ENCODE measurements at regions of chr12 and their contacts with region 1.

Region 1: GRCh38 chr12:115322275-115322674 is 638.3 kb upstream of the TBX3 start:
- DNase-seq: no peak
- ATAC-seq: no peak
- H3K4me3 ChIP-seq: no peak overlapping the region
- H3K27ac ChIP-seq: no peak overlapping the region
- H3K4me1 ChIP-seq: peaks cover 4 to 7% of the 10 kb centered on the region in 2 donors
- H3K27me3 ChIP-seq: no peaks in the 10 kb centered on the region

Region 2: DNA sequence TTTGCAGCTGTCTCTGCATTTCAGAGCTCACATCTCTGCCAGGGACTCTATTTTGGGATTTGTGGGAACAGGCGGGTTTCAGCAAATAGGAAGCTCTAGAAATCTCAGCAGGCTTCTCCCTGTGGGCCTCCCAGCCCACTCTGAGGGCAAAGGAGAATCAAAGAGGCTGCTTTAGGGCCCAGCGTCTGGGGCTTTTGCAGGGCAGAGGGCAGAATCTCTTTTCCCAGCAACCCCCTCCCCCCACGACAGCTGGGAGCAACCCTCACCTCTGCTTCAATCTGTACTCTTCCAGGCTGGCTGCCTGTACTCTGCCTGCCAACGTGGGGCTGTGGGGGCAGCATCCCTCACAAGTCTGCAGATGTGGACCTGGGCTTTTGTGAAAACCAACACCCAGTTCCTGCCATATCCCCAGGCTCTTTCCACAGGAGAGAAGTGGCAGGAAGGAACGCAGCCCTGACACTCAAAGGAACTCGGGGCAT is 108.7 kb before region 1 on chr12:
- intact Hi-C with region 1: no loop called
- DNase-seq: no peak
- ATAC-seq: no peak
- H3K4me3 ChIP-seq: no peak overlapping the region
- H3K27ac ChIP-seq: no peak overlapping the region
- H3K4me1 ChIP-seq: peaks cover 0 to 2% of the 10 kb centered on the region in 2 donors
- H3K27me3 ChIP-seq: no peaks in the 10 kb centered on the region

Region 3: DNA sequence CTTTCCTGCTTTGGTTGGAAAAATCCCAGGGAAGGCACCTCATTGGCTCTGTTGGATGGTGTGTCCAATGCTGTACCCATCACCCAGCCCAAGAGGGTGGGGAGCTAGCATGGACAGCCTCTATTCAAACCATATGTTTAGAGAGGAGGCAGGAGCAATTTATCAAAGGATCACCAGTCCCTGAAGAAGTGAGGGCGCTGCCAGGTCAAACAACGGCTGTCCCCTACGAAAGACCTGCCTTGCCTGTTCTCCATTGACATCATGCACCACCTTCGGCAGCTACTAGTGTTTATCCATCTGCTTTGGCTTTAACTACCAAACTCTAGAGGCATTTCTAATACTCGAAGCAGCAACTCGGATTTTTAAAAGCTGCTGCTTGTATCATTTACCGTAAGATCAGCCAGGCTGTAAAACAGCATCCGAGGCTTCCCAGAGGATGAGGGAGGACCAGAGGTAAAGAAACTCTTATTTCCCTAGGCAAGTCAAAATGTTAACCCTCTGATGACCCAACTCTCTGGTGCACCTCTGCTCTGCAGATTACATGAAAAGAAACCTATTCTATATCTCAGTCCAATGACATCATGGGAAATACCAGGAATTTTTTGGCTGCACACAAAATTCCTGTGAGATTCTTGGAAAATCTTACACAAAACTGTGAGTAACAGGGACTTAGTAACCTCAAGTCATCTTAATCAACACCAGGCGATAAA is 82.6 kb after region 1 on chr12:
- intact Hi-C with region 1: loop called in 1 of 2 experiments (anchors 10 kb)
- DNase-seq: no peak
- ATAC-seq: peak; percentile 16
- H3K4me3 ChIP-seq: no peak overlapping the region
- H3K27ac ChIP-seq: peak overlapping the region in 1 of 2 donors; percentile 22
- H3K4me1 ChIP-seq: peaks cover 0 to 3% of the 10 kb centered on the region in 2 donors
- H3K27me3 ChIP-seq: no peaks in the 10 kb centered on the region

Region 4: DNA sequence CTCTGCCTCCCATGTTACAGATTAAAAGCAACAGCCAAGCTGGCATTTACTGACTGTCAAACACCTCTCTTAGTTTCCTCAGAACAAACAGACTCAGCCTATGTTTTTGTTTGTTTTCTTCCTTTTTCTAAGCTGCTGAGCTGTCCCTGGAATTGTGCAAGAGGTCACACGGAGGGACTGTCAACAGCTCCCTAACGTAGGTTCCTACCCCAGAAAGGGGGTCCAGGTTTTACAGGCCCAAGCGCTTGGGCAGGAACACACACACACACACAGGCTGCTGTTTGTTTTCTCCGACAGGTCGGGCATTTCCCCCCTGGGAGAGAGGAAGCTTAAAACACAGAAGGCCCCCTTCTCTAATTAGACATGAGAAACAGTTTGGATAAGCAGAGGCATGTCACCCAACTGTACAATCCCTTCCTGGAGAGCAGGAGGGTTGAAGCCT is 101.3 kb after region 1 on chr12:
- intact Hi-C with region 1: no loop called
- DNase-seq: no peak
- ATAC-seq: no peak
- H3K4me3 ChIP-seq: no peak overlapping the region
- H3K27ac ChIP-seq: no peak overlapping the region
- H3K4me1 ChIP-seq: no peaks in the 10 kb centered on the region
- H3K27me3 ChIP-seq: no peaks in the 10 kb centered on the region